Activated naive CD4-positive, alpha-beta T cell treated with anti-CD3 and anti-CD28 coated beads, Interleukin-2, amount 10 ng/mL, durations not matched to agents 7 days and 5 days (primary cell): ENCODE measurements at regions of chr14 and their contacts with region 1.

Region 1: DNA sequence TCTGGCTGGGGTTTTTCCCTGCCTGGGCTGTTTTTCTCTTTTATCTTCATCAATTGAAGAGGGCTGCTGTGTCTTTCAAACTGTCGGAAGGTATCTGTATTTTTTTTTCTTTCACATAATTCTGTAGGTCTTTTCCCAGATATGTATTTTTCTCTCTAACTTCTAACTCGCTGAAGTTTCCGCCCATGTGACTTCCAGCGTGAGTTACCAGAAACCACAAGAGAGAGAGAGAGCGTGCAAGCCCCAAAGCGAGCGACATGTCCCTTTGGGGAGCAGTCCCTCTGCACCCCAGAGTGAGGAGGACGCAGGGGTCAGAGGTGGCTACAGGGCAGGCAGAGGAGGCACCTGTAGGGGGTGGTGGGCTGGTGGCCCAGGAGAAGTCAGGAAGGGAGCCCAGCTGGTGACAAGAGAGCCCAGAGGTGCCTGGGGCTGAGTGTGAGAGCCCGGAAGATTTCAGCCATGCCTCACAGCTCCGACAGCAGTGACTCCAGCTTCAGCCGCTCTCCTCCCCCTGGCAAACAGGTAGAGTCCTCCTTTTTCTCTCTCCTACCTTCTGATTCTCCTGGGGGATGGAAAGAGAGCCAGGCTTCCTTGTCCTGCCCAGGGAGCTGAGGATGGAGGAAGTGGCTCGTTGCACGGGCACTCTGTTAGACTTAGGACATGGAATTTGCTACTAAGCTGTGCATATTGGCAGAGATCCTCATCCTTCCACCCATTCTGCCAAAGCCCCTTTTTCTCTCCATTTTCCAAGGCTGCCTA is at the start of gene BATF:
- DNase-seq: peak; percentile 86
- H3K4me3 Mint-ChIP-seq: peak within 1 kb of the TSS; percentile 99
- H3K27ac Mint-ChIP-seq: peak within 1 kb of the TSS; percentile 99
- H3K4me1 Mint-ChIP-seq: peaks cover 71% of the 10 kb centered on the region
- H3K27me3 Mint-ChIP-seq: peaks cover 4% of the 10 kb centered on the region

Region 2: DNA sequence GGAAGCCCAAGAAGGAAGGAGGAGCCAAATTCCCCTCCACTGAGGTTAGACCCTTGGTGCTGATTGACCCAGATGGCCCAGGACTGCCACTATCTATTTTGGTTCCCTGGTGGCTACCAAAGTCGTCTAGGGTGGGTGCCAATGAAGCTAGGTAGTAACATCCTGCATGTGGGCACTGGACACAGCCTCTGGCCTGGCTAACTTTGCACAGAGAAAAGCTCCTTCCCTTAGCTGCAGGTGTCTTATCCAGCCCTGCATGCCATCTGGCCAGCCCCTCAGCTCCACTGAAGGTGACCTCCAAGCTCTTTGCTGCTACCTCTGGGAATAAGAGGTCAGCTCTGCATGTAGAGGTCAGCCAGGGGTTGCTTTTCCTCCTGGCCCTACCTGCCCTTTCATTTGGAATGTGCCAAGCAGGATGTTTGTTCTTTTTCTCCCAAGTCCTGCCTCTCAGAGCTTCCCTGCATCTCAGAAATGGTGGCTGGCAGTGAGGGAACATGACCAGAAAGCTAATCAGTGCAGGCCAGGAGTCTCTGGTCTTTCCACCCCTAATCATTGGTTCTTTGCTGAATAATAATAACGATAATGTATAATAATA is 60.6 kb before region 1 on chr14:
- CTCF ChIA-PET with region 1: no interaction called
- DNase-seq: no peak
- H3K4me3 Mint-ChIP-seq: no peak overlapping the region
- H3K27ac Mint-ChIP-seq: no peak overlapping the region
- H3K4me1 Mint-ChIP-seq: peaks cover 9% of the 10 kb centered on the region
- H3K27me3 Mint-ChIP-seq: no peaks in the 10 kb centered on the region

Region 3: DNA sequence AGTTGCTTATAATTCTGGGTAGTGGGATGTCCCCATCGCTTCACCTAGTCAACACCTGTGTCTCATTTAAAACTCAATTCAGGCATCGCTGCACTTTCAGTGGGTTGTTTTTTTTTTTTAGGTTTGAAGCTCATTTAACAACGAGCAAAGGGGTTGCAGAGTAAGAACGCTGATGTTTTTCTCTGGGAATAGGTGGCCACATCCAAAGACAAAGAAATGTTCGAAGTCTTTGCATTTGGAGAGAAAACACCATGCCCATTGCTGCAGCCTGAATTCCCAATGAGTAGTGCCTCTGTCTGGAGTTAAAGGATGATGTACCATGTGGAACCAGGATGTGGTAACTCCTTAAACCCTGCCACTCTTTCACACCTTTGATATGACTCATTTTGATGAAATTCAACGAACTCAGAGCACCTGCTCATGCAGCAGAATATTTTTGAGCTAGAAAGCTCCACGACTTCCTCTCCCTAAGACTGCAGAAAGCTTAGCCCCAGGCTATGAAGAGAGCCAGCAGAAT is 35.2 kb before region 1 on chr14:
- CTCF ChIA-PET with region 1: interaction called, 13 read pairs
- DNase-seq: peak; percentile 27
- H3K4me3 Mint-ChIP-seq: no peak overlapping the region
- H3K27ac Mint-ChIP-seq: peak overlapping the region; percentile 43
- H3K4me1 Mint-ChIP-seq: peaks cover 38% of the 10 kb centered on the region
- H3K27me3 Mint-ChIP-seq: peaks cover 4% of the 10 kb centered on the region

Region 4: GRCh38 chr14:75542588-75543091 is 20.2 kb after region 1 on chr14:
- CTCF ChIA-PET with region 1: interaction called, 40 read pairs
- DNase-seq: peak; percentile 77
- H3K4me3 Mint-ChIP-seq: peak overlapping the region; percentile 66
- H3K27ac Mint-ChIP-seq: peak overlapping the region; percentile 96
- H3K4me1 Mint-ChIP-seq: peaks cover 63% of the 10 kb centered on the region
- H3K27me3 Mint-ChIP-seq: no peaks in the 10 kb centered on the region

Region 5: DNA sequence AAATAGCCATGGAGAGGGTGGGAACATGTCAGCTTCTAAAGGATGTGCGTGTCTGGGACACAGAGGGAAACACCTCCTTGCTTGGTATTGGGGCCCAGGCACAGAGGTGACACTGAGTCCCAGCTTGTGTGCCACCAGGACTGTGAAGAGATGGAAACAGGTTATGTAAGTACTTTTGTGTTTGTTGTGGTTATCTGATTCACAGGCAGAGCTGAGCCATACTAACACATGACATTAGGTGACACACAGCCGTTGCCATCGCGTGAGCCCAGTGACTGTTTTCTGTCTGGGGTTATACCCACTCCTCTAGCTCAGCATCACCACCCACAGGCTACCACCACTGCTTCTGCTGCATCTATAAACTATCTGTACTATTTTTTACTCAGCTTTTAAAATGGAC is 43.9 kb after region 1 on chr14:
- CTCF ChIA-PET with region 1: interaction called, 161 read pairs
- DNase-seq: peak; percentile 81
- H3K4me3 Mint-ChIP-seq: no peak overlapping the region
- H3K27ac Mint-ChIP-seq: peak overlapping the region; percentile 90
- H3K4me1 Mint-ChIP-seq: peaks cover 58% of the 10 kb centered on the region
- H3K27me3 Mint-ChIP-seq: no peaks in the 10 kb centered on the region